Activated CD8-positive, alpha-beta T cell treated with anti-CD3 and anti-CD28 coated beads, Interleukin-2, amount 10 ng/mL, durations not matched to agents 7 days and 5 days (primary cell): ENCODE measurements at regions of chr6 and their contacts with region 1.

Region 1: GRCh38 chr6:41787219-41787917 is at the start of gene TOMM6:
- DNase-seq: peak; percentile 97
- ATAC-seq: peak; percentile 86
- H3K4me3 Mint-ChIP-seq: peak within 1 kb of the TSS; percentile 93
- H3K27ac Mint-ChIP-seq: peak within 1 kb of the TSS; percentile 98
- H3K4me1 Mint-ChIP-seq: peaks cover 22% of the 10 kb centered on the region
- H3K27me3 Mint-ChIP-seq: peaks cover 8% of the 10 kb centered on the region
- total RNA-seq, gene TOMM6: 215 to 218 TPM

Region 2: GRCh38 chr6:41602864-41603608 is 184.3 kb before region 1 on chr6:
- CTCF ChIA-PET with region 1: interaction called, 14 read pairs
- POLR2A ChIA-PET with region 1: no interaction called
- DNase-seq: peak; percentile 84
- ATAC-seq: peak; percentile 89
- H3K4me3 Mint-ChIP-seq: no peak overlapping the region
- H3K27ac Mint-ChIP-seq: peak overlapping the region; percentile 18
- H3K4me1 Mint-ChIP-seq: peaks cover 4% of the 10 kb centered on the region
- H3K27me3 Mint-ChIP-seq: peaks cover 3% of the 10 kb centered on the region

Region 3: GRCh38 chr6:41767156-41767833 is 20.1 kb before region 1 on chr6:
- CTCF ChIA-PET with region 1: interaction called, 10 read pairs
- POLR2A ChIA-PET with region 1: interaction called, 3 read pairs
- DNase-seq: no peak
- ATAC-seq: no peak
- H3K4me3 Mint-ChIP-seq: no peak overlapping the region
- H3K27ac Mint-ChIP-seq: no peak overlapping the region
- H3K4me1 Mint-ChIP-seq: peaks cover 16% of the 10 kb centered on the region
- H3K27me3 Mint-ChIP-seq: peaks cover 1% of the 10 kb centered on the region

Region 4: DNA sequence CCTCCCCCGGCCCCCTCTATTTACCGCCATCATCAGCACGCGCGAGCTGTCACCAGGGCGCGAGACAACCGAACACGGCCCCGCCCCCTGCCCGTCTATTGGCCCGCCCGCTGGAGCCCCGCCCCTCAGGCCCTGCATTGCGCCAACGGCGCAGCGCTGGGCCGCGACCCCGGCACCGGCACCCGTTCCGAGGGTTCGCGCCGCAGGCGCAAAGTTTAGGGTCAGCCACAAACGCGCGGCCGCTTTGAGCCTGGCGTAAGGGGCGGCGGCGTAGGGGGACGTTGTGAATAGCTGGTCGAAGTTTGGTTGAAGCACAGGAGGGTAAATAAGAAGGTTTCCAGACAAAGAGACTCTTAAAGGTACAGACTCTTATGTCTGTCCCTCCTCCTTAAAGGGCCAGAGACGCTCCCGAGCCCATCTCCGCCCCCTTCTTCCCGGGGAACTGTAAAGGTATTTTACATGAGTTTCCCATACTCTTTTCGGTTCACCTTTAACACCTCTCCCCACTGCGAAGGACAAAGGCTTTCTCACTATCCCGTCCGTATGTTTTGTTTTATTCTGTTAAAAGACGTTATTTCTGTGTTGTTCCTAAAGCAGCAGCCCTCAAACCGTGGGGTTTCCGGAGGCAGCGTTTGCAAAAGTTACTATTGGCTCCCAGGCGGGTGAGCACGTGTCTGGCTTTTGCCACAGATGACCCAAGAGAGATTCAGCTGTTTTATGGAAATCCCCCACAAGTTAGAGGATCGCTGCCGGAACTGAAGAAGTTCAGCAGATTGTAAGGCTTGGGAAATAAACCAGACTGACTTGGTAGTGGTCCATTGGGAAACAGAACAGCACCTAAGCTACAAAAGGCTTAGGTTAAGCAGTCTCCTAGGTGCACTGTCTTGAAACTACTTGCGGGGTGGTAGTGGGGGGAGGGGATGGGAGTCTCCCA is 108.2 kb after region 1 on chr6 and contains the start of gene USP49:
- CTCF ChIA-PET with region 1: interaction called, 11 read pairs
- POLR2A ChIA-PET with region 1: interaction called, 12 read pairs
- DNase-seq: peak; percentile 94
- ATAC-seq: peak; percentile 97
- H3K4me3 Mint-ChIP-seq: no peak within 1 kb of the TSS
- H3K27ac Mint-ChIP-seq: peak within 1 kb of the TSS; percentile 78
- H3K4me1 Mint-ChIP-seq: peaks cover 17% of the 10 kb centered on the region
- H3K27me3 Mint-ChIP-seq: no peaks in the 10 kb centered on the region
- total RNA-seq, gene USP49: 6.2 to 7.8 TPM

Region 5: GRCh38 chr6:42043787-42044475 is 256.6 kb after region 1 on chr6:
- CTCF ChIA-PET with region 1: interaction called, 286 read pairs
- POLR2A ChIA-PET with region 1: interaction called, 33 read pairs
- DNase-seq: peak; percentile 96
- ATAC-seq: peak; percentile 48
- H3K4me3 Mint-ChIP-seq: peak overlapping the region; percentile 75
- H3K27ac Mint-ChIP-seq: peak overlapping the region; percentile 92
- H3K4me1 Mint-ChIP-seq: peaks cover 89% of the 10 kb centered on the region
- H3K27me3 Mint-ChIP-seq: no peaks in the 10 kb centered on the region

Region 6: DNA sequence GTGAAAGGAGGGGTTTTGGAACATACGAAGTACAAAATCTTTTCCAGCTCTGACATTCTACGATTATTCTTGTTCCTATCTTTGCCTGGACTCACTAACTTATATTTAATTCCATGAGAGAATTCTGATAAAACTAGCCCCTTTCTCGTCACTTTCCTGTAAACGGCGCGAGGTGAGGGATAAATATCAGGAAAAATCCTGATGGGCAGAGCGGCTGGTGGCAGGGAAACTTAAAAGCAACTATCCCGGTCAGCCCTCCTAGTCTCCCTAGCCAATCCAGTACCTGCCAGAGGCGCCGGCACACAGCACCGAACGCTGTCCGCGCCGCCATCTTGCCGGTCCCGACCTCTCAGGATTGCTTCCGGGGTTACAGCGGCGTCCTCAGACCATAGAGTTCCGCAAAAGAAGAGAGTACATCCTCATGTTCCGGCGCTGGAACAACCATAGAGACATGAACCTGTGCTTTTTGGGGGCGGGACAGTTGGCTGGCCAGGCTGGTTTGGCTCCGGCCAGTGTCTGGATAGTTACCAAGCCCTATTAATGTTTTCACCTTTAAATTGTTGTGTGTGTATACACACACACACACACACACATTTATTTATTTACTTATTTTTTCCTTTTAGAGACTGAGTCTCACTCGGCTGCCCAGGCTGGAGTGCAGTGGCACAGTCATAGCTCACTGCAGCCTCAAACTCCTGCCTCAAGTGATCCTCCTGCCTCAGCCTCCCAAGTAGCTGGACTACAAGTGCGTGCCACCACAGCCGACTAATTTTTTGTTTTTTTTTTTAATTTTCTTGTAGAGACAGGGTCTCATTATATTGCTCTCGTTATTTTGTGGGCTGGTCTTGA is 430.4 kb after region 1 on chr6 and contains the start of gene MRPS10:
- CTCF ChIA-PET with region 1: interaction called, 13 read pairs
- POLR2A ChIA-PET with region 1: no interaction called
- DNase-seq: peak; percentile 95
- ATAC-seq: peak; percentile 99
- H3K4me3 Mint-ChIP-seq: peak within 1 kb of the TSS; percentile 100
- H3K27ac Mint-ChIP-seq: peak within 1 kb of the TSS; percentile 91
- H3K4me1 Mint-ChIP-seq: peaks cover 30% of the 10 kb centered on the region
- H3K27me3 Mint-ChIP-seq: no peaks in the 10 kb centered on the region
- total RNA-seq, gene MRPS10: 32.6 to 33.8 TPM